ENCODE measurements at regions of chr19 and their contacts with region 1.

Region 1: DNA sequence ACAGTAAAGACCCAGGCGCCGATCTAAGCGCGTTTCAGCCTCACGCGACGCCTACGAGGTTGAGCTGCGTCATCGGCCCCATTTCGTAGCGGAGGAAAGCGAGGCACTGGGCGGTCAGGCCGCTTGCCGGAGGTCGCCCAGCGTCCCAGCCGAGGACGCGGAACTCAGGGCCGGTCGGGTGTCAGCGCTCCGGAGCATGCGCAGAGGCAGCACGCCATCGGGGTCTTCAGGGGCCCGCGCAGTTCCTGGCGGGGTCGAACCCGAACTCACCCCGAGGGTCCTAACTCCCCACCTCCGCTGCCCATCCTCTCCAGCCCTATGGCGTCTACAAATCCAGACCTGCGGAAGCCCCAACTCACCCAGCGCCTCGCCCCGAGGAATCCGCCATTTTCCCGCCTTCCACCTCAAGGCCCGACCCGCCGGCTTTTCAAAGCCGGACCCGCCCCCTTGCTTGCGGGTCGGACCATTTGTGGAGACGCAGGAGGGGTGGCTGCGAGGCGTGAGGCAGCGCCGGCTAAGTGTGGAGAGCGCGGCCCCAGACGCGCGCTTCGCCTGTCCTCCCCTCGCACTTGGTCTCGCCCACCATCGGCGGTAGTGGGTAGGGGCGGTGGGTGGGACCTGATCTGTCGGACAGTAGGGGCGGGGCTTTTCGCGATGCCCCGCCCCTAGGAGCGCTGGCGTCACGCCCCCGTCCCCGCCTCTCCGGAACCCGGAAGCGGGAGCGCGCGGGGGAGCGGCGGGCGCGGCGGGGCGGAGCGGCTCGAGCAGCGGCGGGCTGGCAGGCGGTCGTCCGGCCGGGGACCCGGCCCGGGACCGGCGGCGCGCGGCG is at the starts of genes HAUS8 and MYO9B:
- DNase-seq: peak; percentile 98 to 99
- H3K4me3 ChIP-seq: peak within 1 kb of the TSS; percentile 80 to 96
- H3K27ac ChIP-seq: peak within 1 kb of the TSS; percentile 82
- H3K4me1 ChIP-seq: peaks cover 51% of the 10 kb centered on the region
- H3K27me3 ChIP-seq: no peaks in the 10 kb centered on the region
- CTCF ChIP-seq: no peak
- POLR2A ChIP-seq: peak in 1 of 2 donors; percentile 81
- total RNA-seq, gene HAUS8: 4.7 TPM
- total RNA-seq, gene MYO9B: 100 TPM

Region 2: DNA sequence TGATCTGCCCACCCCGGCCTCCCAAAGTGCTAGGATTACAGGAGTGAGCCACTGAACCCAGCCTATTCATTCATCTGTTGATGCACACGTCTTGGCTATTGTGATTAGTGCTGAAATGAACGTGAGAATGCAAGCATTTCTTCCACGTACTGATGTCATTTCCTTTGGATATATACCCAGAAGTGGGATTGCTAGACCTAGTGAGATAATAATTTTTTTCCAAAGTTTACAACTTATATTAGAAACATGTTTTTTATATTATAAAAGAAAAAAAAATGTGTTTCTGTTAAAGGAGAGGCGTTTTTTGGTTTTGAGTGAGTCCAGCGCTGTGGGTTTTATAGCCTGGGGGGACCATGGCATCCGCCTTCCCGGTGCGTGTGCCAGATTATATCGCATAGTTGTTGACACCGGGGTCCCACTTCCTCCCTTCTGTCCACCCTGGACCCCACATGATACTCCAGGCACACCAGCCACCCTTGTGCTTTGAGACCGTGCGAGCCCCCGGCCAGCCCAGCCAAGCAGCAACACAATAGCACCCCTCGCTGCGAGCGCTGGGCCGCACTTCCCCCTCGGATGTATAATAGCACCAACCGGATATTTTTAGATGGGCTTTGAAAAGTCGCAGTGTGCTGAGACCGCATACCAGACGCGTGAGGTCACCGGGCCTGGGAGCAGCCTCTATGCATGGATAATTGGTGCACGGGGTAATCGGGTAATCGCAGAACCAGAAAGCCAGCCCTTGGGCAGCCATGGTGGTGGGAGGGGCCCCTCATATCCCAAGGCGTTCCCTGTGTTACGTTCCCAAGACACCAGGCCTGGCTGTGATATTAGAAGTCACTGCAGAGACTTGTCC is 60.0 kb after region 1 on chr19:
- intact Hi-C with region 1: loop called (anchors 10 kb)
- DNase-seq: peak in 1 of 2 donors; percentile 94
- H3K4me3 ChIP-seq: peak overlapping the region; percentile 13 to 27
- H3K27ac ChIP-seq: peak overlapping the region; percentile 99
- H3K4me1 ChIP-seq: peaks cover 32% of the 10 kb centered on the region
- H3K27me3 ChIP-seq: no peaks in the 10 kb centered on the region
- CTCF ChIP-seq: no peak
- POLR2A ChIP-seq: peak in 1 of 2 donors; percentile 27